ENCODE measurements at regions of chr9 and their contacts with region 1.

Region 1: GRCh38 chr9:33623658-33624586 is 99.9 kb downstream of the ANKRD18B start:
- DNase-seq: peak; percentile 68
- H3K4me3 Mint-ChIP-seq: peak overlapping the region; percentile 18
- H3K27ac Mint-ChIP-seq: no peak overlapping the region
- H3K4me1 Mint-ChIP-seq: no peaks in the 10 kb centered on the region
- H3K27me3 Mint-ChIP-seq: peaks cover 24% of the 10 kb centered on the region
- CTCF ChIP-seq: peak; percentile 59

Region 2: DNA sequence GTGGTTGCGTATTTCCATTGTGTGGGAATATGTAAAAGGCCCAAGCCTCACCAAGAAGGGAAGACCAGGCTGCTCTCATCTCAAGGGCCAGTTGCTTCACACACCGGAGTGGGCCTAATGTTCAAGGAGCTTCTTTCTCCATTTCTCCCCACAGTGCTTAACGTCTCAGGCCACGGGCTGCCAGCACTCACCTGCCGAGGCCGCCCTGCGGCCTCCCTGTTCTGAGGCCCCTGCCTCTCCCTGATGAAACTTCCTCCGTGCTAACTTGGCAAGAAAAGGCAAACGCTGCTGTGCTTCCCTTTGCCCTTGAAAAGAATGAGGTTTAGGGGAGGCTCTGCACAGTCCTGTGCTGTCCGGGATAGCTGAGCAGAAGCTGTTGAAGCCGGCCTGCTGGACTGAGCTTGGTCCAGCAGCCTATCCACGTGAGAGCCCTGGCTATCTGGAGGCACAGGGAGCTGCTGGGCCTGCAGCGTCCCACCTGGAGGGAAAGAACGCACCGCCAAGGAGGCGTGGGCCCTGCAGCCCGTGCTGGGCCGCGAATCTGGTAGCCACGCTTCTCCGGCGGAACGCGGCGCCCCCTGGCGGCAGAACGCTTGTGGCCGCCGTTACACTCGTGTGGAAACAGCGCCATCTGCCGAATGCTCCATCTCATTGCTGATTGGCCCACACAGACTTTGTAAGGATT is 97.9 kb after region 1 on chr9:
- CTCF ChIA-PET with region 1: interaction called, 44 read pairs
- intact Hi-C with region 1: loop called (anchors 1 kb)
- DNase-seq: peak; percentile 83
- H3K4me3 Mint-ChIP-seq: no peak overlapping the region
- H3K27ac Mint-ChIP-seq: no peak overlapping the region
- H3K4me1 Mint-ChIP-seq: no peaks in the 10 kb centered on the region
- H3K27me3 Mint-ChIP-seq: peaks cover 26% of the 10 kb centered on the region
- CTCF ChIP-seq: peak; percentile 98

Measured in Calu3 (cell line).